Transverse colon (tissue), 4 donors: ENCODE measurements at regions of chr1 and their contacts with region 1.

Region 1: DNA sequence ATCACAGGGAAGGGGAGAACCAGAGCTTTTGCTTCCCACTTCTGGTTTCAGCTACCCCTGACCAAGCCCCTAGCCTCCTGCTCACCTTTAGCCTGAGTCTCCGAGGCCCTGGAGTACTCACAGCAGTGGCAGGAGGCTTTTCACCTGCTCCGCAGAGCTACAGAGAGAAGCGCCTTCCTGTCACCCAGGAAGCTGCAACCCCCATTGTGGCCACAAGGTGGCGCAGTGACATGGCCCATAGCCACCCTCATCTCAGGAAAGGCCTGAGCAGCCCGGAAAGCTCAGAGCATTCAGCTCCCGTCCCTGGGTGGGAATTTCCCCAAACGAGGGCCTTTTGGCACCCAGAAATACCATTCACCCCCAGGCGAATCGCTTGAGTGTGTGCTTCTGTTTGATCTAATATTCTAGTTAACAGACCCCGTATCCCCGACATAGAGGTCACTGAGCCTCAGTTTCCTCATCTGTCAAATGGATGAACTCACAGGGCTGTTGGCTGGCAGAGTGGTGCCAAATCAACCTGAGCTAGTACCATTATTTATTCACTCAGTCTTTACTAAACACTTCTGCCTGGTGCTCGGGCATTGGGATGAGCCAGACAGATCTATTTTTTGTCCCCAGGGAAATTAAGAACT is 25.3 kb downstream of the A3GALT2 start:
- DNase-seq: peak; percentile 91
- H3K4me3 ChIP-seq: no peak overlapping the region
- H3K27ac ChIP-seq: peak overlapping the region in 1 of 4 donors; percentile 21
- H3K4me1 ChIP-seq: peaks cover 3 to 11% (median 6%) of the 10 kb centered on the region in 4 donors
- H3K27me3 ChIP-seq: no peaks in the 10 kb centered on the region
- CTCF ChIP-seq: peak; percentile 97 to 99 (median 99)
- EP300 ChIP-seq: no peak
- POLR2A ChIP-seq: no peak

Region 2: GRCh38 chr1:32592943-32593342 is 702.6 kb before region 1 on chr1:
- in situ Hi-C with region 1: no loop called
- intact Hi-C with region 1: no loop called
- DNase-seq: no peak
- H3K4me3 ChIP-seq: no peak overlapping the region
- H3K27ac ChIP-seq: no peak overlapping the region
- H3K4me1 ChIP-seq: no peaks in the 10 kb centered on the region
- H3K27me3 ChIP-seq: no peaks in the 10 kb centered on the region
- CTCF ChIP-seq: no peak
- EP300 ChIP-seq: no peak
- POLR2A ChIP-seq: no peak

Region 3: GRCh38 chr1:33169290-33170055 is 126.1 kb before region 1 on chr1:
- in situ Hi-C with region 1: no loop called
- intact Hi-C with region 1: no loop called
- DNase-seq: no peak
- H3K4me3 ChIP-seq: no peak overlapping the region
- H3K27ac ChIP-seq: no peak overlapping the region
- H3K4me1 ChIP-seq: no peaks in the 10 kb centered on the region
- H3K27me3 ChIP-seq: no peaks in the 10 kb centered on the region
- CTCF ChIP-seq: no peak
- EP300 ChIP-seq: no peak
- POLR2A ChIP-seq: no peak

Region 4: DNA sequence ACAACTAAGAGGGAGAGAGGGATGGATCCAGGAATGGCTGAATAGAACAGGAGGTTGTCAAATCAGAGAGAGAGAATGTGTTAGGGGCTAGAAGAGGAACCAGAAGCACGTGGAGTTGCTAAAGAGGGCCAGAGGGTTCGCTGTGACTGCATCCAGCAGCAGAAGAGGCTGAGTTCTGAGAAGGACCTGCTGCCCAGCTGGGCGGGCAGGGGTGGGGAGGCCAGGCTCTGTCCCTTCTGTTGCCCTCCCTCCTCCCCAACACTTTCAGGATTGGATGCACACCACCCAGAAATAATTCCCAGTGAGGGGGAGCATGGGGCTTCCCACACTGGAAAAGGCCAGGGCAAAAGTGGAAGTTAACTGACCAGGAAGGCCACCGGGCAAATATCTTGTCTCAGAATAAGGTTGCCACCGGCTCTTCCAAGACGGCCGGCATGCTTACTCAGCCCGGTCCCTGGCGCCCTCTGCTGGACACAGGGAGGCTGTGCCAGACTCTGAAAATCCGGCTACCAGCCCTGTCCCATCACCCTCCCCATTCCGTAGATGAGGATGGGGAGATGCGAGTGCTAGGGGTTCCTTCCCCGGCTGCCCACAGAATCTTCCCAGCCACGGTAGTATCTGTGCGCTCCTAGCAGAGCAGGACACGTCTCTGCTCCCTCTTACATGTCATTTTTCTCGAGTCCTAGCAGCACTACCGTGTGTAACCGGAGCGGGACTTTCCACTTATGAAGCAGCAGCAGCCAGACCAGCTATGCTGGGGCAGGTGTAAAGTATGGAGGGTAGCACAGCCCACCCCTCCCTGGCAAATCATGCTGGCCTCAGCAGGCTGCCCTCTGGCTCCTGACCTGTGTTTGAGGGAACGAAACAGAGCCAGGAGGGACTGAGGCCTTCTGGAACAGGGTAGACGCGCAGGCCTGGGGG is 72.2 kb after region 1 on chr1:
- in situ Hi-C with region 1: loop called (anchors 5 to 10 kb)
- intact Hi-C with region 1: loop called (anchors 2 kb)
- DNase-seq: peak; percentile 89
- H3K4me3 ChIP-seq: no peak overlapping the region
- H3K27ac ChIP-seq: peak overlapping the region; percentile 11 to 55 (median 36)
- H3K4me1 ChIP-seq: peaks cover 10 to 33% (median 13%) of the 10 kb centered on the region in 4 donors
- H3K27me3 ChIP-seq: no peaks in the 10 kb centered on the region
- CTCF ChIP-seq: peak; percentile 95 to 98 (median 96)
- EP300 ChIP-seq: no peak
- POLR2A ChIP-seq: no peak

Region 5: DNA sequence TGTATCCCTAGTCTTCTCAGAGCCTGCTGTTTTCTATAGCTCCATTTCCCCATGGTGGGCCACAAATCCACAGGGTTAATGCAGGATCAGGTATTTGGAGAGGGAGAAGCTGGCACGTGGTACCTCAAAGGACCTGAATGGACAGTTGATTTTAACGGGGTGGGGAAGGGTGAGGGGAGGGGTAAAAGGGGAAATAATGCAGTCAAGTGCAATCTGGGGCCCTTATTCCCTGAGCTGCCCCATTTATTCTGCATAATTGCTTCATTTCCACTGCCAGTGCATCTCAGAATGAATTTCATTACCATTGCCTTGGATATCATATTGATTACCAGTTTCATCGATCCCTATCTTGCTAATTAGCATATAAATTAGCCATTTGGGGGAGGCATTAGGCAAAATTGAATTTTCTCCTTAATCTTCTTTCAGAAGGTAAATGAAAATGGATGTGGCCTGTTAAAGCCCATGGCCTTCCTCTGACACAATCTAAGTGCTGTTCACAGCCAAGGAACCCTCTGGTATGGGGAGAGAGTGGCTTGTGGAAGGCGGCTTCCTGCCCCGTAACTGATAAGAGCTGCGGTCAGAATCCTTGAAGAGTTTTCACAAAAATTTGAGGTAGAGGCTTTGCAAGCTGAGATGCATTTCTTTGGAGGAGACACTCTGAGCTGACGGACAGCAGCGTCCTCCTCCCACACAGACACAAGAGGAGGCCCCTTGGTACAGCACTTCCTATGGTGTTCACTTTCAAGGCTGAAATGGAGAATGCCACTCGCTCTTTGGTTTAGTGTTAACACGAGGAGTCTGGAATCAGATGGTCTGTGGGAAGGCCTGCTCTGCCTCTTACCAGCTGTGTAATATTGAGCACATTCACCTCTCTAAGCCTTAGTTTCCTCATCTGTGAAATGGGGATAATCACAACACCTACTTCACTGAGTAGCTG is 100.9 kb after region 1 on chr1:
- in situ Hi-C with region 1: no loop called
- intact Hi-C with region 1: no loop called
- DNase-seq: no peak
- H3K4me3 ChIP-seq: no peak overlapping the region
- H3K27ac ChIP-seq: no peak overlapping the region
- H3K4me1 ChIP-seq: peaks cover 0 to 11% (median 4%) of the 10 kb centered on the region in 4 donors
- H3K27me3 ChIP-seq: no peaks in the 10 kb centered on the region
- CTCF ChIP-seq: no peak
- EP300 ChIP-seq: no peak
- POLR2A ChIP-seq: no peak

Region 6: DNA sequence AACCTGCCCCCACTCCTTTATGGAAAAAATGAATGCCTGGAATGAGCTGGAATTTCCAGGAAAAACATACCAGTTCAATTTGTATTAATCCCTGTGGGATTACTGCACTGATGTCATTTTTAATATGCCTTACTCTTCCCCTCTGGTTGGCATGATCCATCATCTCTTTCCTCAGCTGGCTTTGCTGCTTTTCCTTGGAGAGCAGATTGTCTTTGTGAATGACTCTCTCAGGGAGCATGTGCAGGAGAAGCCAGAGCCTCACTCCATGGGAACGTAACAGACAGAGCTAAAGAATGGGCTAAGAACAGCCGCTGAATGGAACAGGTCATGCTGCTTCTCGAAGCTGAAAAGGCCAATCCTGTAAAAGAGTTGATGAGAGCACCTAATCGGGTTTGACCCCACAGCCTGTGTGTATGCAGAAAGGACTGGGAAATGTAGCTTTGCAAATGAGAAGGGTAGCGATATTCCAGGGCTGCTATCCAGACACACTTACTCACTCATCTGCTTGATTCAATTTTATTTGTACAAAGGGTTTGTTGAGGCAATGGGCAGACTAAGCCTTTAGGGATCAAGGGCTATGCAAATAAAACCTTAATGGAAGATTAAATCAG is 114.6 kb after region 1 on chr1:
- in situ Hi-C with region 1: no loop called
- intact Hi-C with region 1: no loop called
- DNase-seq: no peak
- H3K4me3 ChIP-seq: no peak overlapping the region
- H3K27ac ChIP-seq: peak overlapping the region in 1 of 4 donors; percentile 28
- H3K4me1 ChIP-seq: peaks cover 0 to 6% (median 1%) of the 10 kb centered on the region in 4 donors
- H3K27me3 ChIP-seq: no peaks in the 10 kb centered on the region
- CTCF ChIP-seq: no peak
- EP300 ChIP-seq: no peak
- POLR2A ChIP-seq: no peak

Region 7: GRCh38 chr1:33460947-33461629 is 165.5 kb after region 1 on chr1:
- in situ Hi-C with region 1: loop called in 2 of 4 experiments (anchors 10 to 25 kb)
- intact Hi-C with region 1: loop called (anchors 10 kb)
- DNase-seq: peak; percentile 43
- H3K4me3 ChIP-seq: no peak overlapping the region
- H3K27ac ChIP-seq: peak overlapping the region; percentile 54 to 79 (median 60)
- H3K4me1 ChIP-seq: peaks cover 0 to 33% (median 6%) of the 10 kb centered on the region in 4 donors
- H3K27me3 ChIP-seq: no peaks in the 10 kb centered on the region
- CTCF ChIP-seq: no peak
- EP300 ChIP-seq: no peak
- POLR2A ChIP-seq: no peak

Region 8: DNA sequence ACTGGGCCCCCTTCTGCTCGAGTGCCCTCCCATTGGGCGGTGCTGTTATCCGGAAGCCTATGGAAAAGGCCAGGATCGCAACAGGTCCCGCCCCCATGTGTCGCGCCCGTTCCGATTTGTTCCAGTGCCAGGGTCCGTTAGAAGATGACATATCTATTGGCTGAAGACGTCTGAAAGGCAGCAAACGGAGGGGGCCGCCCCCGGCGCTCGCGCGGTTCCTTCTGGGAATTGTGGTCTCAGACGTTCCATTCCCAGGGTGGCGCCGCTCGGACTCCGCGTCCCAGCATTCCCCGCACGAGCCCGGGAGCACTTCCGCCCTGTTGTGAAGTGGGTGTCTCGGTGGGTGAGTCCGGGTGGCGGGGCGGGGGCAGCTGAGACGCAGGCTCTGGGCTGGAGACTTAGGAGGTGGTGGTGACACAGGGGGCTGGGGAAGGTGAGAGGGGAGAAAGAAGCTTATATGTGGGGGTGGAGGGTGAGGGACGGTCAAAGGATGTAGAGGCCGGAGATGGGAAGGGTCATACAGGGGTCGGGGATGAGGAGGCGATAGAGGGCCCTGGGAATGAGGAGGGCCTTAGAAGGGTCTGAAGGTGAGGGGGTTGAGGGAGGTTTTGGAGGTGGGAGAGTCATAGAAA is 176.9 kb after region 1 on chr1 and contains the start of gene ZSCAN20:
- in situ Hi-C with region 1: loop called in 3 of 4 experiments (anchors 10 to 25 kb)
- intact Hi-C with region 1: loop called (anchors 10 kb)
- DNase-seq: peak; percentile 98
- H3K4me3 ChIP-seq: peak within 1 kb of the TSS; percentile 55 to 83 (median 72)
- H3K27ac ChIP-seq: peak within 1 kb of the TSS; percentile 69 to 88 (median 84)
- H3K4me1 ChIP-seq: peaks cover 5 to 30% (median 15%) of the 10 kb centered on the region in 4 donors
- H3K27me3 ChIP-seq: no peaks in the 10 kb centered on the region
- CTCF ChIP-seq: no peak
- EP300 ChIP-seq: no peak
- POLR2A ChIP-seq: peak; percentile 47
- total RNA-seq, gene ZSCAN20: 3.7 to 5.7 (median 4.7) TPM